ENCODE measurements at regions of chr17 and their contacts with region 1.

Region 1: GRCh38 chr17:38667099-38667786 is 7.5 kb downstream of the EPOP start:
- DNase-seq: peak; percentile 82 to 89
- ATAC-seq: peak; percentile 55 to 68; a peak in 5 of 6 replicates
- H3K4me3 ChIP-seq: no peak overlapping the region
- H3K27ac ChIP-seq: no peak overlapping the region
- H3K4me1 ChIP-seq: peaks cover 14% of the 10 kb centered on the region; the same call in 2 of the 3 replicates
- CTCF ChIP-seq: peak; percentile 100
- EP300 ChIP-seq: no peak
- POLR2A ChIP-seq: no peak
- RAD21 ChIP-seq: peak; percentile 99 to 100

Region 2: DNA sequence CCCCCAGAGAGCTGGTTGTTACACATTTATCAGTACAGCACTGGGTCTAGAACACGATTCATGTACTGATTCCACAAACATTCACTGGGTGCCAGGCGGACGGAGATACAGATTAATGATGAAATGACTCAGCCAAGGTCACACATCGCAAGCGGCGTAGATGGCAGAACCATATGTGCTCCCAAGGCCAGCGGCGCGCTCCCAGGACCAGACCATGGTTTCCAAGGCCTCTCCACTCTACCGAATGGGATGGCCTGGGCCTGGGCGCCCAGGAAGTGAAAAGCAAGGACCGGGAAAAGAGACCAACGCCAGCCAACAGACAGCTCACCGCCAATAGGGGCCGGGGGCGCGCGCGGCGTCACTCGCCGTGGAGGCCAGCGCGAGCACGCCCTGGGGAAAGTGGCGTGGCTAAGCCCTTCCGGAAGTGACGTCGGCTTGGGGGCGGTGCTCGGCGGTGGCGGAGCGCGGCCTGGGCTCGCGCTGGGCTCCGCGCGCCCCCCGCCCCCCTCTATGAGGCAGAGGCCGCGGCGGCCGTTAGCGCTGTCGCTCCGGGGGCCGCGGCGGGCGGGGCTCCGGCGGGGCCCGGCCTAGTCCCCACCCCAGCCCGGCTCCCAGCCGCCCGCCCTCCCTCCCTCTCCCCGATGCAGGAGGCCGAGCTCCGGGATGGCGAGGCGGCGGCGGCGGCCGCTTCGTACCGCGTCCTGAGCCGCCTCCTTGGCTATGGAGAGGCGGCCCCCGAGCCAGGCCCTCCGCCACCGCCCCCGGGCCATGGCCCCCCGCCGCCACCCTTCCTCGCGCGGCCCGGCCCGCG is 315.6 kb before region 1 on chr17 and contains the start of gene SOCS7:
- CTCF ChIA-PET with region 1: interaction called, 17 read pairs
- POLR2A ChIA-PET with region 1: no interaction called
- DNase-seq: peak; percentile 89 to 97
- ATAC-seq: peak; percentile 90 to 93
- H3K4me3 ChIP-seq: peak within 1 kb of the TSS; percentile 95
- H3K27ac ChIP-seq: peak within 1 kb of the TSS; percentile 96 to 99
- H3K4me1 ChIP-seq: peaks cover 24% of the 10 kb centered on the region
- CTCF ChIP-seq: no peak
- EP300 ChIP-seq: no peak
- POLR2A ChIP-seq: peak; percentile 96
- RAD21 ChIP-seq: no peak
- polyA plus RNA-seq, gene SOCS7: 20.6 and 27.7 TPM in 2 replicates

Region 3: DNA sequence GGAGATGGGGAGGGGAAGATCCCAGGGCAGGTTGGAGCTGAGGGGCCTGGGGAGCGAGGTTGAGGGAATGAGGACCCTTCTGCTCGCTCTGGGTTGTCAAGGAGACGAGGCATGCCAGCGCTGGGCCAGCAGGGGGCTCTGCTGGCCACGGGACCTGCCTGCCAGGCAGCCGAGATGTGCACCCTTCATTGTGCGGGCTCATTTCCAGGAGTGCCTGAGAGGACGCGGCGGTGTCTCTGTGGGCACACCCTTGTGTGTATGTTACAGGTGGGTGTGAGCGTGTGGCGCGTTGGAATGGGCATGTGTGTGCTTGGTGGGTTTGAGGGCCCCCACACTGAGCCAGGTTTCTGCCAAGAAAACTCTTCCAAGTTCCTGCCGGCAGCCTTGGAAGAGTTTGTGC is 223.1 kb before region 1 on chr17:
- CTCF ChIA-PET with region 1: interaction called, 17 read pairs
- POLR2A ChIA-PET with region 1: no interaction called
- DNase-seq: peak; percentile 71 to 91
- ATAC-seq: peak; percentile 91 to 97
- H3K4me3 ChIP-seq: no peak overlapping the region
- H3K27ac ChIP-seq: peak overlapping the region in 1 of 2 experiments; percentile 59; a peak in 2 of 6 replicates
- H3K4me1 ChIP-seq: peaks cover 29% of the 10 kb centered on the region
- CTCF ChIP-seq: peak; percentile 96
- EP300 ChIP-seq: no peak
- POLR2A ChIP-seq: no peak
- RAD21 ChIP-seq: peak; percentile 98 to 99

Region 4: GRCh38 chr17:38509008-38509771 is 158.1 kb before region 1 on chr17:
- CTCF ChIA-PET with region 1: interaction called, 22 read pairs
- POLR2A ChIA-PET with region 1: no interaction called
- DNase-seq: peak; percentile 86 to 97
- ATAC-seq: peak; percentile 67 to 86
- H3K4me3 ChIP-seq: no peak overlapping the region
- H3K27ac ChIP-seq: no peak overlapping the region
- H3K4me1 ChIP-seq: peaks cover 19% of the 10 kb centered on the region
- CTCF ChIP-seq: peak; percentile 66
- EP300 ChIP-seq: no peak
- POLR2A ChIP-seq: no peak
- RAD21 ChIP-seq: peak; percentile 39 to 66; a peak in 4 of 5 replicates

Region 5: DNA sequence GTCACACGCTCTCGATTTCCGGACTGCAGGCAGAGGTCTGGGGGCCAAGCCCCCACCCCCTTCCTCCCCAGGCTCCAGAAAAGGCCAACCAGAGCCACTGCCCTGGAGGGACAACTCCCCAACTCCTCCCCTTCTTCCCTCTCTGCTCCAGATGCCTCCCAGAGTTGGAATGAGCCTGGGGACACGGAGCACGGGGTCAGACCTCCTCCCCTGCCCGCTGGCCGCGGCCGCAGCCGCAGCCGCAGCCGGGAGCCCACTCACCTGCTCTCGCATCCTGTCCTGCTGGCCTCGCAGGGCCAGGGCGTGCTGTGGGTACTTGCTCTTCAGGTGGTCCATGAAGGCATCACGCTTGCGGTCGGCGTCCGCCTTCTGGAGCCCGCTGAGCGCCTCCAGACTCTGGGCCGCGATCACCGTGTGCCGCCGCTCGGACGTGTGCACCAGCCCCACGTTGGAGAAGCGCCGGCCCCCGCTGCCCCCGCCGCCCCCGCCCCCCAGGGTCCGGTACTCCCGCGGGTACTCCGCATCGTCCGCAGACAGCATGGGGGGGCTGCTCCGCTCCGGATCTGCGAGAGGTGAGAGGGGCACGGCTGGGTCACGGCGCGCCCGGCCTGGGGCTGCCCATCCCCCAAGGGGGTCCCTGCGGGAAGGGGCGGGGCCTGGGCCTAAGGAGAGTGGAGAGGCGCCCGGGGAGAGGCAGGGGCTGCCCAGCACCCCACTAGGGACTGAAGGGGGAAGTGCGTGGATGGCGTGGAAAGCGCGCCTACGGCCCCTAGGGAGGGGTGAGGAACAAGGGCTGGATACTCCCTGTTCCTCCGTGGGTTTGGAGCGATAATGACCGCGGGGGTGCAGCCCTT is 88.8 kb before region 1 on chr17:
- CTCF ChIA-PET with region 1: interaction called, 190 read pairs
- POLR2A ChIA-PET with region 1: no interaction called
- DNase-seq: no peak
- ATAC-seq: no peak
- H3K4me3 ChIP-seq: no peak overlapping the region
- H3K27ac ChIP-seq: no peak overlapping the region
- H3K4me1 ChIP-seq: peaks cover 8% of the 10 kb centered on the region
- CTCF ChIP-seq: no peak
- EP300 ChIP-seq: no peak
- POLR2A ChIP-seq: no peak
- RAD21 ChIP-seq: no peak

Region 6: DNA sequence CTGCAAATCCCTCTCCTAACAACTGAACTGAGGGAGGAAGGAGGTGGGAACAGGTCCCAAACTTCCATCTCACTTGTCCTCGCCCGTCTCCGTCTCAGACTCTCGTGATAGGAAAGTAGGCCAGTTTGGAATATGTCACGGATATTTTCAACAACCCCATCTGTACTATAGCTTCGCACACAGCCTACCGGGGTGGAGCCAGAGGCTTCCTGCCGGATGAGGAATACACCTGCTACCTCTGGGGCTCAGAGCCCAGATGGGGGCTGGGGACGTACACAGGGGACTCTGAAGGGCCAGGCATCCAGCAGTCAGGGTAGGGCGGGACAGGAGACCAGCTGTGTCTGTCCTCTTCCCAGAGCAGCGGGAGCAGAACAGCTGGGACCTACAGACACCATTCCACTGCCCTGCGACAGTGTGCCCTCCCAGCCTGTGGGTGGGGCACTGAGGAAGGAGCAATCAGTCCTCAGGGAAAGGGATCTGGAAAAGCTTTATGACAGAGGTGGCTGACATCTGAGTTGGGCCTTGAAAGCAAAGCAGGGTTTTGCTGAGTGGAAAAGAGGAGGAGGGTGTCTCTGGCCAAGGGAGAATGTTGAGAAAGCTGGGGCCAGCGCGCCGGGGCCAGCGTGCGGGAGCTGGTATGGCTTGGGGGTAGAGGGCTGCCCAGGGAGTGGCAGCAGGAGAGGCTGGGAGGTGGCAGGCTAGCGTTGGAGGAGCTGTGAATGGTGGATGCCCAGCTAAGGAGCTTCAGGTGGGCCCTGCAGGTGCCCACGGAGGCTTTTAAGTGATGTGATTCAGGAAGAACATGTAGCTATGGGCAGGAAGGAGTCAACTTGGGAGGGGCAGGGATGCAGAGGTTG is 50.0 kb before region 1 on chr17:
- CTCF ChIA-PET with region 1: interaction called, 15 read pairs
- POLR2A ChIA-PET with region 1: no interaction called
- DNase-seq: no peak
- ATAC-seq: peak in 1 of 2 experiments; percentile 26; a peak in 2 of 6 replicates
- H3K4me3 ChIP-seq: no peak overlapping the region
- H3K27ac ChIP-seq: no peak overlapping the region
- H3K4me1 ChIP-seq: peaks cover 13% of the 10 kb centered on the region; the same call in 2 of the 3 replicates
- CTCF ChIP-seq: no peak
- EP300 ChIP-seq: no peak
- POLR2A ChIP-seq: no peak
- RAD21 ChIP-seq: no peak

Measured in A549 (cell line).